ENCODE measurements at regions of chr17 and their contacts with region 1.

Region 1: GRCh38 chr17:7351665-7352501 is at the start of gene KCTD11:
- DNase-seq: peak; percentile 95 to 97
- ATAC-seq: peak; percentile 85
- H3K4me3 ChIP-seq: peak within 1 kb of the TSS; percentile 60 to 84
- H3K27ac ChIP-seq: peak within 1 kb of the TSS; percentile 87 to 95
- H3K4me1 ChIP-seq: peaks cover 0 to 7% of the 10 kb centered on the region in 2 donors
- H3K27me3 ChIP-seq: no peaks in the 10 kb centered on the region
- total RNA-seq, gene KCTD11: 12.4 to 15.8 TPM

Region 2: DNA sequence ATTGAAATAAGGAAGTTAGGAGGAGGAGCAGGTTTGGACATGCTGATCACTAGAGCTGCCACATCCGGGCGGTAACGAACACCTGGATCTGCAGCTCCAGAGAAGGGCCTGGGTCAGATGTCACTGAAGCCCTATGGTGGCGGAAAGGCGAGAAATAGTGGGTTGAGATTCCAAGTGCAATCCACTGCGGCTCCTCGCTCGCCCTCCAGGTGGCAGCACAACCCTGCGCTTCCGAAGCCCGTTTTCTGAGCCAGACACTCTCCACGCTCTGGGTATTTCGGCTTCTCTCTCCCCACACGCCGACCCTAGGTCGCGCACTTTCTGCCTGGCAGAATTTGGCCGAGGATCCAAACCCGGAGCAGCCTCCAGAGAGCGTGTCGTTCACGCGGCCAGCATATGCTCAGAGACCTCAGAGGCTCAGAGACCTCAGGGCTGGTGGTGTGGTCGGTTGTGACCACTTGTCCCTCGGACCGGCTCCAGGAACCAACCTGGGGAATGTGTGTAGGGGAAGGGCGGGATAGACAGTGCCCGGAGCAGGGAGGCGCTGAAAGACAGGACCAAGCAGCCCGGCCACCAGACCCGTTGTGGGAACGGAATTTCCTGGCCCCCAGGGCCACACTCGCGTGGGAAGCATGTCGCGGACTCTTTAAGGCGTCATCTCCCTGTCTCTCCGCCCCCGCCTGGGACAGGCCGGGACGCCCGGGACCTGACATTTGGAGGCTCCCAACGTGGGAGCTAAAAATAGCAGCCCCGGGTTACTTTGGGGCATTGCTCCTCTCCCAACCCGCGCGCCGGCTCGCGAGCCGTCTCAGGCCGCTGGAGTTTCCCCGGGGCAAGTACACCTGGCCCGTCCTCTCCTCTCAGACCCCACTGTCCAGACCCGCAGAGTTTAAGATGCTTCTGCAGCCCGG is 71.1 kb before region 1 on chr17:
- intact Hi-C with region 1: loop called in 1 of 2 experiments (anchors 5 kb)
- DNase-seq: peak; percentile 86 to 95
- ATAC-seq: peak; percentile 94
- H3K4me3 ChIP-seq: peak overlapping the region in 1 of 2 donors; percentile 3
- H3K27ac ChIP-seq: peak overlapping the region in 1 of 2 donors; percentile 55
- H3K4me1 ChIP-seq: no peaks in the 10 kb centered on the region
- H3K27me3 ChIP-seq: no peaks in the 10 kb centered on the region

Region 3: GRCh38 chr17:7329374-7329996 is 22.4 kb before region 1 on chr17:
- intact Hi-C with region 1: loop called in 1 of 2 experiments (anchors 1 kb)
- DNase-seq: peak; percentile 99
- ATAC-seq: peak; percentile 94
- H3K4me3 ChIP-seq: peak overlapping the region; percentile 54 to 57
- H3K27ac ChIP-seq: peak overlapping the region; percentile 15 to 73
- H3K4me1 ChIP-seq: no peaks in the 10 kb centered on the region
- H3K27me3 ChIP-seq: no peaks in the 10 kb centered on the region

Region 4: GRCh38 chr17:7394452-7395191 is 42.7 kb after region 1 on chr17 and contains the start of gene PLSCR3:
- intact Hi-C with region 1: loop called in 1 of 2 experiments (anchors 5 kb)
- DNase-seq: peak; percentile 93 to 95
- ATAC-seq: peak; percentile 95
- H3K4me3 ChIP-seq: peak within 1 kb of the TSS; percentile 53 to 89
- H3K27ac ChIP-seq: peak within 1 kb of the TSS; percentile 45 to 88
- H3K4me1 ChIP-seq: no peaks in the 10 kb centered on the region
- H3K27me3 ChIP-seq: no peaks in the 10 kb centered on the region
- total RNA-seq, gene PLSCR3: 41.2 to 43.1 TPM

Region 5: GRCh38 chr17:7435221-7435675 is 83.4 kb after region 1 on chr17 and contains the start of gene TMEM102:
- intact Hi-C with region 1: loop called (anchors 2 to 10 kb)
- DNase-seq: peak; percentile 97
- ATAC-seq: peak; percentile 90
- H3K4me3 ChIP-seq: peak within 1 kb of the TSS; percentile 17 to 35
- H3K27ac ChIP-seq: no peak within 1 kb of the TSS
- H3K4me1 ChIP-seq: no peaks in the 10 kb centered on the region
- H3K27me3 ChIP-seq: no peaks in the 10 kb centered on the region
- total RNA-seq, gene TMEM102: 3.6 to 5.1 TPM

Region 6: GRCh38 chr17:7484067-7484918 is 132.4 kb after region 1 on chr17 and contains the start of gene POLR2A:
- intact Hi-C with region 1: loop called in 1 of 2 experiments (anchors 10 kb)
- DNase-seq: peak; percentile 99
- ATAC-seq: peak; percentile 93
- H3K4me3 ChIP-seq: peak within 1 kb of the TSS; percentile 56 to 91
- H3K27ac ChIP-seq: peak within 1 kb of the TSS; percentile 94 to 98
- H3K4me1 ChIP-seq: peaks cover 0 to 4% of the 10 kb centered on the region in 2 donors
- H3K27me3 ChIP-seq: peaks cover 0 to 1% of the 10 kb centered on the region in 2 donors
- total RNA-seq, gene POLR2A: 93.8 to 116 TPM

Region 7: DNA sequence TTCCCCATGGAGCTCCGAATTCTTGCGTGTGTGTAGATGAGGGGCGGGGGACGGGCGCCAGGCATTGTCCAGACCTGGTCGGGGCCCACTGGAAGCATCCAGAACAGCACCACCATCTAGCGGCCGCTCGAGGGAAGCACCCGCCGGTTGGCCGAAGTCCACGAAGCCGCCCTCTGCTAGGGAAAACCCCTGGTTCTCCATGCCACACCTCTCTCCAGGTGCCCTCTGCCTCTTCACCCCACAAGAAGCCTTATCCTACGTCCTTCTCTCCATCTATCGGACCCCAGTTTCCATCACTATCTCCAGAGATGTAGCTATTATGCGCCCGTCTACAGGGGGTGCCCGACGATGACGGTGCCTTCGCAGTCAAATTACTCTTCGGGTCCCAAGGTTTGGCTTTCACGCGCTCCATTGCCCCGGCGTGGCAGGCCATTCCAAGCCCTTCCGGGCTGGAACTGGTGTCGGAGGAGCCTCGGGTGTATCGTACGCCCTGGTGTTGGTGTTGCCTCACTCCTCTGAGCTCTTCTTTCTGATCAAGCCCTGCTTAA is 209.2 kb after region 1 on chr17:
- intact Hi-C with region 1: loop called (anchors 5 to 10 kb)
- DNase-seq: peak; percentile 94 to 97
- ATAC-seq: peak; percentile 89
- H3K4me3 ChIP-seq: peak overlapping the region; percentile 68 to 77
- H3K27ac ChIP-seq: peak overlapping the region; percentile 44 to 64
- H3K4me1 ChIP-seq: no peaks in the 10 kb centered on the region
- H3K27me3 ChIP-seq: no peaks in the 10 kb centered on the region

Measured in aorta (tissue), 5 donors.